ENCODE measurements at regions of chr6 and their contacts with region 1.

Region 1: DNA sequence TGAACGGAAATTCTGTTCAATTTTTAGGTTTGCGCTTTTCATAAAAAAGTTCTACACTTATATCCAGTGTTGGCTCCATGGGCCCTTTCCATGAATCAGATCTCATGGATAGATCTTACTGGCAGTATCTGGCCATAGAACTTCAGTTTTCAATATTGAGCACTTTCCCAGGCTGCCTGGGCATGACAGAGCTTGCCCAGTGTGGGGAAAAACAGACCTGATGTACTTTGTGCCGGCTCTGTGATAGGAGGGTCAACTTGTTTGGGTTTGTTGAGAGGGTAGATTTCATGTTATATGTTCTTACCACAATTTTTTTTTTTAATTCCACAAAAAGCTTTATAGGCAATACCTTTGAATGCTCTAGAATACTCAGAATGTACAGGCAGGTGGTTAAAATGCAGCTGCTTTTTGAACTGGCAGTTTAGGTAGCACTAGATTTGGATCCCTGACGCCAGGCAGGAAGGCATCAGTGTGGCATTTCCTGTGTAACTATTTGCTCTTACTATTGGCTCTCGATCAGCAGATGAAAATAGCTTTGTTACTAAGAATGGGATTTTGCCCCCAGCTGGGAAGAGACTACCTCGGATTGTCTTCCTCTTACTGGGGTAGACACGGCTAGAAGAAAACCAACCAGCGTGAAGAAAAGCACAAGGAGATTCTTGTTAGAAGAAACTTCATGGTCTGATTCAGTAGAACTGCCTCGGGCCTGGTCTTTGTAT is 404.9 kb upstream of the SOX4 start:
- DNase-seq: no peak
- ATAC-seq: no peak
- H3K4me3 ChIP-seq: no peak overlapping the region
- H3K27ac ChIP-seq: peak overlapping the region in 1 of 2 donors; percentile 25
- H3K4me1 ChIP-seq: peaks cover 3 to 6% of the 10 kb centered on the region in 2 donors
- H3K27me3 ChIP-seq: no peaks in the 10 kb centered on the region

Region 2: GRCh38 chr6:20411953-20412681 is 776.5 kb before region 1 on chr6:
- intact Hi-C with region 1: loop called in 1 of 2 experiments (anchors 5 kb)
- DNase-seq: no peak
- ATAC-seq: peak; percentile 44
- H3K4me3 ChIP-seq: no peak overlapping the region
- H3K27ac ChIP-seq: peak overlapping the region; percentile 33 to 48
- H3K4me1 ChIP-seq: peaks cover 0 to 14% of the 10 kb centered on the region in 2 donors
- H3K27me3 ChIP-seq: no peaks in the 10 kb centered on the region

Region 3: DNA sequence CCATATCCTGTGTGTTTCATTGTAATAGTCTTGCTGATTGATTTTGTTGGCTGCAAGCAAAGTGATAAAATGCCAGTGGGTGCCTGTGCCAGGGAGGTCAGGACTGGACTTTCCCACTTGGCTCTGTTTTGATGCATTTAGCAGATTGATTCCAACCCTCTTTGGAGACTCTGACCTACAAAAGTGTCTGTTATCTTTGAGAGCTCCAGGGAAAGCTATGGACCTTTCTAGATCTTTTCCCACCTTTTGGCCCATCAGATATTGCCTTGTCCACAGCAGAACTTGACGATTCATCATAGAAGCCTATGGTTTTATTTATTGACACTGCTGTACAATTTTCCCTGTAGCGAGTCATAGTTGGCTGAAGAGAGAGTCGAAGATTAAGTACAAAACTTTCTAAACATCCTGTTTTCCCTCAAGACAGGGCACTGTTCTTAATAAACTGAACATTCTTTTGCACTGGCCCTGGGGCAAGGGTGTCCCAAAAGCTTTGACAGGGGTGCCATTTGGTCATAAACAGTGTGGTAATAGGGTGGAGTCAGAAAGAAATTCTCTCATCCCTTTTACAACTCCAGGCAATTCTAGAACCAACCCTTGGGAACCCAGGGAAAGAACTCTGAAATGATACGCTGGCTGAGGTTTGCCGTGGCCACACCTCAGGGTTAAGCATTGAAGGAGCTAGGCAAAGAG is 733.3 kb before region 1 on chr6:
- intact Hi-C with region 1: no loop called
- DNase-seq: no peak
- ATAC-seq: no peak
- H3K4me3 ChIP-seq: no peak overlapping the region
- H3K27ac ChIP-seq: no peak overlapping the region
- H3K4me1 ChIP-seq: peaks cover 0 to 14% of the 10 kb centered on the region in 2 donors
- H3K27me3 ChIP-seq: no peaks in the 10 kb centered on the region

Measured in aorta (tissue), 5 donors.